Posterior cingulate gyrus (tissue), 11 donors: ENCODE measurements at regions of chr14 and their contacts with region 1.

Region 1: GRCh38 chr14:39266871-39267591 is 33.3 kb downstream of the MIA2 start:
- DNase-seq: peak; percentile 65 to 95 (median 80)

Region 2: GRCh38 chr14:39154594-39155189 is 112.3 kb before region 1 on chr14:
- intact Hi-C with region 1: no loop called
- DNase-seq: no peak

Region 3: GRCh38 chr14:39174560-39175444 is 92.2 kb before region 1 on chr14 and contains the start of gene PNN:
- intact Hi-C with region 1: loop called (anchors 2 kb)
- DNase-seq: peak; percentile 96 to 100 (median 98)